ENCODE measurements at regions of chr18 and their contacts with region 1.

Region 1: DNA sequence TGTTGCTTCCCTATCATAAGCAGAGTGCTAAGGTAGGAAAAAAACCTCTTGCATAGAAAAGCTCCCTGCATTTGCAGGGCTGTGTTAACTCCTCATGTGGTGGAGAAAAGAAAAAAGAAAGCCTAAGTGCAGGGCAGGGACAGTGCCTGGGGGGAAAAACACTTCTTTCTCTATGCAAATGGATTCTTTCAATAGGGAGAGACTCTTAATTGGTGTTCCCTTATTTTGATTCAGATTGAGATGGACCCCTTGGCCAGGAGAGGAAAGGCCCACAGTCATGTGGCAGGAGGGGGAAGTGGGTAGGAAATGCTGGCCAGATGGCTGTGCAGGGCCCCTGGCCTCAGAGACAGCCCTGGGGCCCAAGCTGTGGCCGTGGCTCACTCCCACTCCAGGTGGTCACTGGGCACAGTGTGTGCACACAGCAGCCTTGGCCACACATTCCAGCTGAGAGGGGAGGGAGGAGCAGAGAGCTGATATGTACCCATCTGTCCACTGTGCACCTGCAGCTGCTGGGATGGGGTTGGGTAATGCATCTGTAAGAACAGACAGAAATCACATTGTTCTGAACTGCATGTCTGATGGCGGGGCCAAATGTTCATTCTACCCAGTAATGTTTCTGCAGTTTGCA is 410.4 kb downstream of the DSC3 start:
- DNase-seq: no peak
- ATAC-seq: no peak
- H3K4me3 ChIP-seq: no peak overlapping the region
- H3K4me3 Mint-ChIP-seq: no peak overlapping the region
- H3K27ac ChIP-seq: no peak overlapping the region
- H3K27ac Mint-ChIP-seq: no peak overlapping the region
- H3K4me1 ChIP-seq: no peaks in the 10 kb centered on the region
- H3K4me1 Mint-ChIP-seq: no peaks in the 10 kb centered on the region
- H3K27me3 ChIP-seq: no peaks in the 10 kb centered on the region
- H3K27me3 Mint-ChIP-seq: no peaks in the 10 kb centered on the region
- CTCF ChIP-seq: no peak

Region 2: DNA sequence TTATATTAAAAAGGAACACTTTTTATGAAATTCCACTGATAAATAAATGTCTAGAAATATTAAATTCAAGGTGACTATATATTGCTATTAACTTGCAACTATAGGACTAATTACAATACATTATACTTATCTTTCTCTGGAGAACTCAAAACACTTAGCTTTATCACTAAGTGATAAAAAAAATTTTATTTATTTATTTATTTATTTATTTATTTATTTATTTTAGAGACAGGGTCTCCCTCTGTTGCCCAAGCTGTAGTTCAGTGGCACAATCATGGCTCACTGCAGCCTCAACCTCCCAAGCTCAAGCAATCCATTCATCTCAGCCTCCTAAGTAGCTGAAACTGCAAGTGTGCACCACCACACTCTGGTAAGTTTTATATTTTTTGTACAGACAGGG is 40.7 kb before region 1 on chr18:
- CTCF ChIA-PET with region 1: no interaction called
- POLR2A ChIA-PET with region 1: no interaction called
- intact Hi-C with region 1: no loop called
- DNase-seq: no peak
- ATAC-seq: no peak
- H3K4me3 ChIP-seq: no peak overlapping the region
- H3K4me3 Mint-ChIP-seq: no peak overlapping the region
- H3K27ac ChIP-seq: no peak overlapping the region
- H3K27ac Mint-ChIP-seq: no peak overlapping the region
- H3K4me1 ChIP-seq: no peaks in the 10 kb centered on the region
- H3K4me1 Mint-ChIP-seq: no peaks in the 10 kb centered on the region
- H3K27me3 ChIP-seq: no peaks in the 10 kb centered on the region
- H3K27me3 Mint-ChIP-seq: no peaks in the 10 kb centered on the region
- CTCF ChIP-seq: no peak

Region 3: GRCh38 chr18:30601541-30601940 is 30.6 kb before region 1 on chr18:
- CTCF ChIA-PET with region 1: no interaction called
- POLR2A ChIA-PET with region 1: no interaction called
- intact Hi-C with region 1: loop called in 1 of 2 experiments (anchors 1 kb)
- DNase-seq: no peak
- ATAC-seq: no peak
- H3K4me3 ChIP-seq: no peak overlapping the region
- H3K4me3 Mint-ChIP-seq: no peak overlapping the region
- H3K27ac ChIP-seq: no peak overlapping the region
- H3K27ac Mint-ChIP-seq: no peak overlapping the region
- H3K4me1 ChIP-seq: no peaks in the 10 kb centered on the region
- H3K4me1 Mint-ChIP-seq: no peaks in the 10 kb centered on the region
- H3K27me3 ChIP-seq: no peaks in the 10 kb centered on the region
- H3K27me3 Mint-ChIP-seq: no peaks in the 10 kb centered on the region
- CTCF ChIP-seq: no peak

Region 4: DNA sequence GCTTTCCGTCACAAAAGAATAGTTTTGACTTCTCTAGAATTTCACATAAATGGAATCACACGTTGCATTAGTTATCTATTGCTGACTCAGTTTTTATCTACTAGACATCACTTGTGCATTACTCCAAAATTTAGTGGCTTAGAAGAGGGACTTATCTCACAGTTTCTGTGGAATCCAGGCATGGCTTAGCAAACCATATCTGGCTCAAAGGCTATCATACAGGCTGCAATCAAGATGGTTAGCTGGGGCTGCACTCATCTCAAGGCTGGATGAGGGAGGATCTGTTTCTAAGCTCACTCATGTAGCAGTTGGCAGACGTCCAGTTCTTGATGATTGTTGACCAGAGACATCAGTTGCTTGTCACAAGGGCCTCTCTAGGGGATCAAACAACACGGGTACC is 417.0 kb after region 1 on chr18:
- CTCF ChIA-PET with region 1: no interaction called
- POLR2A ChIA-PET with region 1: no interaction called
- intact Hi-C with region 1: no loop called
- DNase-seq: no peak
- ATAC-seq: no peak
- H3K4me3 ChIP-seq: no peak overlapping the region
- H3K4me3 Mint-ChIP-seq: no peak overlapping the region
- H3K27ac ChIP-seq: no peak overlapping the region
- H3K27ac Mint-ChIP-seq: no peak overlapping the region
- H3K4me1 ChIP-seq: no peaks in the 10 kb centered on the region
- H3K4me1 Mint-ChIP-seq: no peaks in the 10 kb centered on the region
- H3K27me3 ChIP-seq: no peaks in the 10 kb centered on the region
- H3K27me3 Mint-ChIP-seq: peaks cover 7% of the 10 kb centered on the region
- CTCF ChIP-seq: no peak